ENCODE measurements at regions of chr3 and their contacts with region 1.

Region 1: GRCh38 chr3:196694202-196694638 is 17.8 kb downstream of the CEP19 start:
- DNase-seq: peak; percentile 15 to 32 (median 16)
- H3K4me3 ChIP-seq: no peak overlapping the region
- H3K4me3 Mint-ChIP-seq: no peak overlapping the region
- H3K27ac ChIP-seq: peak overlapping the region; percentile 52 to 71
- H3K27ac Mint-ChIP-seq: peak overlapping the region in 5 of 7 donors; percentile 54 to 94 (median 75)
- H3K4me1 ChIP-seq: peaks cover 50 to 51% of the 10 kb centered on the region in 2 donors
- H3K4me1 Mint-ChIP-seq: peaks cover 52% of the 10 kb centered on the region
- H3K27me3 ChIP-seq: no peaks in the 10 kb centered on the region
- H3K27me3 Mint-ChIP-seq: peaks cover 0 to 2% (median 0%) of the 10 kb centered on the region in 3 donors
- CTCF ChIP-seq: peak; percentile 31

Region 2: DNA sequence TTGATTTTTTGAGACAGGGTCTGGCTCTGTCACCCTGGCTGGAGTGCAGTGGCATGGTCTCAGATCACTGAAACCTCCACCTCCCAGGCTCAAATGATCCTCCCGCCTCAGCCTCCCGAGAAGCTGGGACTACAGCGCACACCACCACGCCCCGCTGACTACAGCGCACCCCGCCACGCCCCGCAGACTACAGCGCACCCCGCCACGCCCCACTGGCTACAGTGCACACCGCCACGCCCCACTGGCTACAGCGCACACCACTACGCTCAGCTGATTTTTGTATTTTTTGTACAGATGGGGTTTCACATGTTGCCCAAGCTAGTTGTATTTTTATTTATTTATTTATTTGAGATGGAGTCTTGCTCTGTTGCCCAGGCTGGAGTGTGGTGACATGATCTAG is 442.3 kb before region 1 on chr3:
- intact Hi-C with region 1: loop called in 1 of 2 experiments (anchors 10 kb)
- DNase-seq: no peak
- H3K4me3 ChIP-seq: no peak overlapping the region
- H3K4me3 Mint-ChIP-seq: no peak overlapping the region
- H3K27ac ChIP-seq: no peak overlapping the region
- H3K27ac Mint-ChIP-seq: peak overlapping the region in 2 of 7 donors; percentile 7 to 46
- H3K4me1 ChIP-seq: no peaks in the 10 kb centered on the region
- H3K4me1 Mint-ChIP-seq: peaks cover 5% of the 10 kb centered on the region
- H3K27me3 ChIP-seq: no peaks in the 10 kb centered on the region
- H3K27me3 Mint-ChIP-seq: no peaks in the 10 kb centered on the region
- CTCF ChIP-seq: no peak

Region 3: GRCh38 chr3:196528639-196529233 is 165.5 kb before region 1 on chr3:
- intact Hi-C with region 1: loop called in 1 of 2 experiments (anchors 5 kb)
- DNase-seq: peak; percentile 72 to 80 (median 79)
- H3K4me3 ChIP-seq: peak overlapping the region; percentile 35 to 71 (median 37)
- H3K4me3 Mint-ChIP-seq: peak overlapping the region; percentile 72 to 75
- H3K27ac ChIP-seq: peak overlapping the region in 1 of 2 donors; percentile 53
- H3K27ac Mint-ChIP-seq: peak overlapping the region in 3 of 7 donors; percentile 46 to 64 (median 53)
- H3K4me1 ChIP-seq: peaks cover 8 to 10% of the 10 kb centered on the region in 2 donors
- H3K4me1 Mint-ChIP-seq: peaks cover 6% of the 10 kb centered on the region
- H3K27me3 ChIP-seq: no peaks in the 10 kb centered on the region
- H3K27me3 Mint-ChIP-seq: peaks cover 1 to 19% (median 4%) of the 10 kb centered on the region in 3 donors
- CTCF ChIP-seq: peak; percentile 95

Region 4: GRCh38 chr3:196942226-196942914 is 248.2 kb after region 1 on chr3 and contains the start of gene NCBP2:
- intact Hi-C with region 1: no loop called
- DNase-seq: peak; percentile 98 to 100 (median 99)
- H3K4me3 ChIP-seq: peak within 1 kb of the TSS; percentile 61 to 87 (median 70)
- H3K4me3 Mint-ChIP-seq: peak within 1 kb of the TSS; percentile 96 to 98
- H3K27ac ChIP-seq: peak within 1 kb of the TSS; percentile 90 to 95
- H3K27ac Mint-ChIP-seq: peak within 1 kb of the TSS; percentile 93 to 99 (median 97)
- H3K4me1 ChIP-seq: peaks cover 21 to 25% of the 10 kb centered on the region in 2 donors
- H3K4me1 Mint-ChIP-seq: peaks cover 26% of the 10 kb centered on the region
- H3K27me3 ChIP-seq: no peaks in the 10 kb centered on the region
- H3K27me3 Mint-ChIP-seq: peaks cover 0 to under 1% (median 0%) of the 10 kb centered on the region in 3 donors
- CTCF ChIP-seq: peak; percentile 70
- polyA plus RNA-seq, gene NCBP2: 26.1 to 42.9 (median 33.4) TPM

Measured in CD14-positive monocyte (primary cell).